Head of caudate nucleus (tissue), 42 donors: ENCODE measurements at regions of chr16 and their contacts with region 1.

Region 1: GRCh38 chr16:71808593-71809459 is at the start of gene AP1G1:
- DNase-seq: peak; percentile 90 to 98 (median 96)

Region 2: GRCh38 chr16:71845639-71846430 is 37.0 kb after region 1 on chr16 and contains the start of gene ATXN1L:
- intact Hi-C with region 1: loop called (anchors 5 kb)
- DNase-seq: peak; percentile 70 to 97 (median 92)

Region 3: DNA sequence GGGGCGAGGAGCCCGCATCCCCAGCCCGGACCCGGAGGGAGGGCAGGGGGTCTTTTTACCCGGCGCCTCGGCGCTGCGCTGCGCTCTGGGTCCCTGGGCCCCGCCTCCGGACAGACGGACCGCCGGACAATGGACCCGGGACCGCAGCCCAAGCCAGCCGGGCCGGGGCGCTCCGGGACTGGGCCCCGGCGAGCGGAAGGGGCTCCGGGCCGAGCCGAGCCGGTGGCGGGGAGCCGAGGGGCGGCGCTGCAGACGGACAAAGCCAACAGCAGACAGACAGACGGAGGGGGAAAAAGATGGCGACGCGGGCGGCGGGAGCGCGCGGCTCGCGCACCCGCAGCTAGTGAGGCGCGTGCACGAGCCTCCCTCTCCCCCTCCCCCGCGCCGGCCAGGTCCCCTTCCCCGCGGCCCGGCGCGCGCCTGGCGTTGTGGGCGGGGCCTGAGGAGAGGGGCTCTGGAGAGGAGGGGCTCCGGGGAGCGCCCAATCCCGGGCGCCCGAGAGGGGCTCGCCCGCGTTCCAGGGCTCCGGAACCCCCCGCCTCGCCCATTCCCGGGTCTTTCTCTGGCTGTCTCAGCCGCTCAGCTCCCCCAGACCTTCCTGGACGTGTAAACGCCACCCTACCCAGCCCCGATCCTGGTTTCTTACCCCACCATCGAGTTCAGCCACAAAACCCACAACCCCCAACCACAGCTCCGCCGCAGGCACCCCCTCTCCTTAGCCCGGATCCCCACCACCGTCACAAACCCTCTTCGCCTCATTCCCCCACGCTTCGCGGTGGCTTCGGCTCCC is 75.2 kb after region 1 on chr16 and contains the start of gene ZNF821:
- intact Hi-C with region 1: loop called (anchors 5 kb)
- DNase-seq: peak; percentile 36 to 90 (median 80)

Region 4: GRCh38 chr16:71894921-71895678 is 86.3 kb after region 1 on chr16 and contains the start of gene IST1:
- intact Hi-C with region 1: loop called (anchors 5 kb)
- DNase-seq: peak; percentile 95 to 99 (median 98)